ENCODE measurements at regions of chr4 and their contacts with region 1.

Region 1: DNA sequence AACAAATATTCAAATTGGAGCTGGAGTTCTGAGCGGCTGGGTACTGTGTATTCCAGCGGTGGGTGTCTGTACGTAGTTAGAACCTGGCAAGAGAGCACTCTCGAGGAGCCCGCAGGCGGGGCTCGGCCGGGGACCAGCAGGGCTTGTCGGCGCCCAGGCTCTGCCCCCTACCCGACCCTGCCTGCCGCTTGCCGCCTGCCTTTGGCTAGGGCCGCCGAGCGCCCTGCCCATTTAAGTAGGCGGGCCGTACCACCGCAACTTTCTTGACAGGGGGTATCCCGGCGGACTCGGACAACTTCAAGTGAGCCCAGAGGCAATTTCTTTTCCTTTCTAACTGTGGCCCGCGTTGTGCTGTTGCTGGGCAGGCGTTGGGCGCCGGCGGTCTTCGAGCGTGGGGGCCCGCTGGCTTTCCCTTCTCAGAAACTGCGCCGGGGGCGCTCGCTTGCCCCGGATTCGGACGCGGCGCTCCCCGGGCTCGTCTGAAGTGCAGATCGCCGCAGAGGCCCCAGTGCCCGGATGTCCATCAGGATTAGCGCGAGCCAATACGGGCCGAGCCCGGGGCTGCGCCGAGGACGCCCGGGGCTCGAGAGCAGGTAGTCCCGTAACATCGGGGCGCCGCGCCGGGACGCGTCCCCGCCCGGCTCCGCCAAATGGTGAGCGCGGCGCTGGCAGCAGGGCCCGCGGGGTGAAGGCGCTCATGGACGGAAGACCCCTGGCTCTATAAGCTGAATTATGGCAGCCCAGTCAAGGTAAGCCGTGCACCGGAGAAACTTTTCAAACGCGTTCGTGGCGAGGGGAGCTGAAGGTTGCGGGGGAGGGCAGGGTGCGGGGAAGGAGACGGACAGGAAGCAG is 72.1 kb downstream of the AFF1 start:
- DNase-seq: peak; percentile 98

Region 2: DNA sequence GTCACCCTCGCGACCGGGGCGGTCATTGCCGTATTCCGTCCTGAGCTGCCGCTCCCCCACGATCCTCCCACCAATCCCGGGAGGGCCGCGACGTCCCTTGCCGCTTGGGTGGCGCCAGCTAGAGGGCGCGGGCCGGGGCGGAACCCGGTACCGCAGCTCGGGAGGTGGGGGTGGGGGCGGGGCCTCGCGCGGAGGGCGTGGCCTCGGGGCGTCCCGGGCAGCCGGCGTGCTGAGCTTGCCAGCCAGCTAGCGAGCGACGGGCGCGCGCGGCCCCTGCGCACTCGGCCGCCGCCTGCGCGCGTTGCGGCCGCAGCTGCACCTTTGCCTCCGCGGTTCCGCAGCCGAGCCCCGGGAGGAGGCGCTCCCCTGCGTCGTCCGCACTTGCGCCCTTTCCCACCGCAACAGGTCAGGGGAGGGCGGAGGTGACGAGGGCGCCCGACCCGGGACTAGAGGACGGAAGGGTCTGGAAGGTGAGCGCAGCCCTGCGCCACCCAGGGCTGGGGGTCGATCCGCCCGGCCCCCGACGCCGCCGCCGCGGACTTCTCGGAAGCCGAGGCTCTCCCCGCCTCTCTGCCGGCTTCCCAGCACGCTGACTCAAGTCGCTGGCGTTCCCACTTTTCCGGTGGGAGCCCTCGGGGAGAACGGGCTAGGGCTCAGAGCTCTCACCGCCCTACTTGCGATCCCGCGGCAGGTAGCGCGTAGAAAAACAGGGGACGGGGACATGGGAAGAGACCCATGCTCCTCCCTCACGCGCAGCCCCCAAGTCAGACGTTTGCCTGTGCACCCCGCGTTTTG is 71.9 kb before region 1 on chr4 and contains the start of gene AFF1:
- intact Hi-C with region 1: loop called (anchors 1 kb)
- DNase-seq: peak; percentile 96
- total RNA-seq, gene AFF1: 63.4 TPM

Region 3: DNA sequence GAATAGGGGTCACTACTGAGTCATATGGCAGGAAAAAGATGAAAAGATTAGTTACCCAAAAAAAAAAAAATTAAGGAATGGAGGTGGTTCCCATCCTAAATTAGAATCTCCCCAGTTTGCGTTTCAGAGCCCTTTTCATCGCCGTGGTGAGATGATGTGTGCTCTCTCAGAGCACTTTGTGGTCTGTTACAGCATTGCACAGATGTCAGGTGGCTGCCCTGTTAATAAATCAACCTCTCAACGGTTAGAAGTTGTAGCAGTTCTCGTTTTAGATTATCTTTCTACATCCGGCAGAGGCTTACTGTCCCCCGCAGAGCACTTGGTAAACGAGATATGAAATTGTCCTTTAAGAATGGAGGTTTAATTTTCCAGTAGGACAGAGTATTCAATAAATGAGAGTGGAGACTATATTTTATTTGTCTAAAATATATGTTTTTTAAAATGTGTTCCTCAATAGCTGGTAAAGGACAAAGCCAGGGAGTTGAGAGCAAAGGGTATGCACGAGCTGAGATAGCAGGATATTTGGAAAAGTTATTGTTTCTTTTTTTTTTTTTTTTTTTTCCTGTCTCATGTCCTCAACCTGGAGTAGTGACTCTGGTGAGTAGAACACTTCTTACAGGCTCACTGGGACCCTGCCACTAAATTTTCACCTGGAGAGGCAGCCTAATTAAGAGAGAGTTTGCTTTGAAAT is 45.2 kb before region 1 on chr4:
- intact Hi-C with region 1: loop called (anchors 5 kb)
- DNase-seq: no peak

Region 4: DNA sequence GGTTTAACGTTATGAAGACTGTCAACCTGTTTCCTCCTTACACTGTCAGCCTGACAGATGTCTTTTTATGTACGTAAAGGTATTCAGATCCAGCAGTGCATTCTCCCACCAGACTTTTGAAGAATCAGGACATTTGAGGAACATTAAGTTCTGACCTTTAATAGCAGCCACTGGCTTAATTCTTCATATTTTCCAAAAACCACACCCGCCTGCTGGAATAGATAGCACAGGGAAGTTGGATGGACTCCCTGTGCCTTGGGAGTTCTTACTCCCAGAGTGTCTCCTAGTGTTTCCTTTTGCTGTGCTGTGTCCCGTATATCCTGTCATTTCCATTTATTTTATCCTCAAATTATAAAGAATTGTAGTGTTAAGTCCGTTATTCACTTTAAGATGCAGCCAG is 22.5 kb after region 1 on chr4:
- intact Hi-C with region 1: loop called (anchors 2 kb)
- DNase-seq: no peak

Region 5: DNA sequence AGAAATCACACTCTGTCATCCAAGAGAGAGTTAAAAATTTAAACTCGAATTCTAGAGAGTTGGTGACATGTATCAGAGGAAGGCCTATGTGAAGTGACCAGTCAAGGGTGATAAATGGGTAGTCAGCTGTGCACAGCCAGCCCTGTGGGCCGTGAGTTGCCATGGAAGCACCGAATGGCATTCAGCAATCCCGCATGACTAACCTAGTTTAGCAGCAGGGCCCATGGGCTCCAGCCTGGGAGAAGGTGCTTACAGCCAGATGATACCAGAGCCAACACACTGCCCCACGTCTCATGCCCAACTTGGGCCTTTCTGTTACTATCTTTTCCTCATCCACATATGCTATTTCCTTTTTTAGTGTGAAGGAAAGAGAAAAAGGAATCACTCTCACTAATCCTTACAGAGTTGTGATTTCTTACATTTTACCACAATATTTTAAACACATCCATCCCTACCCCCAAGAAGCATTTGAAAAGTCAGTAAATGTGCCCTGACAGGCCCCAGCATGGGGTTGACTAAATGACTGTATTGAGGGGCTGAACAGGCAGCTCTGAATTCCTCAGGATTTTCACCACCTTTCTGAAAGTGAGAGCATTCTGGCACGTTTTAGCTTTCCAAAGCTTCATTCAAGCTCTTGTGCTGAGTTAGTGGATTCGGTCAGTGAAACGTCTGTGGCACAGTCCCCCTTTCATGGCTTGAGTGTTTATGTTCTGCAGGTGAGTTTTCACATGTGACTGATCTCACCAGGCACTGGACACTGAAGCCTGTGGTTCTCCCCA is 32.1 kb after region 1 on chr4:
- intact Hi-C with region 1: loop called (anchors 5 kb)
- DNase-seq: peak; percentile 89

Region 6: DNA sequence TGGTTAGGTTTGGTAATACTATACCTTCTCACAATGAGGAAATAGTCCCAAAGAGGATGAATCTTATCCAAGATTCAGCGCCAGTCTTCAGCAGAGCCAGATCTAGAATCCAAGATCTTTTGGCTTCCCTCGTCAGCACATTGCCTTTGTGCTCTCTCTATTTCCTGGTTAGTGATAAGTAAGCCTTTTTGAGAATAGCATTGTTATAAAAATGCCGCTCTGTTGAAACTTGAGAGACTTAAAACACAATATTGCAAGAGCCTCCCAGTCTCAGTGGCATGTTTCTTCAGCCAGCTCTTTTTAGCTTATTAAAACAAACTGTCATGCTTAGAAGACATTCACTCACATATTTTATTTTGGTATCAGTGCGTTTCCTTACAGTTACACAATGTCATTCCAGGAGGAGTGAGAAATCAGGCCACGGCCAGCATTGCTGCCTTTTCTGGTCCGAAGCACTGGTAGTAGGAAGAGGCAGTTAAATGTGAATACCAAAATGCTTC is 72.1 kb after region 1 on chr4:
- intact Hi-C with region 1: loop called (anchors 1 kb)
- DNase-seq: no peak

Region 7: GRCh38 chr4:87093443-87094123 is 86.7 kb after region 1 on chr4:
- intact Hi-C with region 1: loop called (anchors 2 kb)
- DNase-seq: no peak